CD8-positive, alpha-beta T cell (primary cell): ENCODE measurements at regions of chr22 and their contacts with region 1.

Region 1: GRCh38 chr22:36180038-36180880 is 19.7 kb upstream of the APOL3 start:
- DNase-seq: peak; percentile 75 to 94 (median 87)
- ATAC-seq: peak; percentile 99
- H3K4me3 ChIP-seq: no peak overlapping the region
- H3K4me3 Mint-ChIP-seq: no peak overlapping the region
- H3K27ac ChIP-seq: no peak overlapping the region
- H3K27ac Mint-ChIP-seq: no peak overlapping the region
- H3K4me1 ChIP-seq: peaks cover 4% of the 10 kb centered on the region
- H3K4me1 Mint-ChIP-seq: peaks cover 4% of the 10 kb centered on the region
- H3K27me3 ChIP-seq: no peaks in the 10 kb centered on the region
- H3K27me3 Mint-ChIP-seq: no peaks in the 10 kb centered on the region
- CTCF ChIP-seq: peak; percentile 84

Region 2: GRCh38 chr22:35350539-35351503 is 829.4 kb before region 1 on chr22:
- CTCF ChIA-PET with region 1: no interaction called
- POLR2A ChIA-PET with region 1: no interaction called
- intact Hi-C with region 1: loop called in 1 of 2 experiments (anchors 1 kb)
- DNase-seq: peak; percentile 67 to 92 (median 83)
- ATAC-seq: peak; percentile 85
- H3K4me3 ChIP-seq: peak overlapping the region; percentile 36 to 46
- H3K4me3 Mint-ChIP-seq: peak overlapping the region; percentile 79
- H3K27ac ChIP-seq: no peak overlapping the region
- H3K27ac Mint-ChIP-seq: no peak overlapping the region
- H3K4me1 ChIP-seq: peaks cover 14% of the 10 kb centered on the region
- H3K4me1 Mint-ChIP-seq: peaks cover 20% of the 10 kb centered on the region
- H3K27me3 ChIP-seq: peaks cover 0 to 5% of the 10 kb centered on the region in 2 experiments
- H3K27me3 Mint-ChIP-seq: peaks cover 11% of the 10 kb centered on the region
- CTCF ChIP-seq: peak; percentile 85

Region 3: DNA sequence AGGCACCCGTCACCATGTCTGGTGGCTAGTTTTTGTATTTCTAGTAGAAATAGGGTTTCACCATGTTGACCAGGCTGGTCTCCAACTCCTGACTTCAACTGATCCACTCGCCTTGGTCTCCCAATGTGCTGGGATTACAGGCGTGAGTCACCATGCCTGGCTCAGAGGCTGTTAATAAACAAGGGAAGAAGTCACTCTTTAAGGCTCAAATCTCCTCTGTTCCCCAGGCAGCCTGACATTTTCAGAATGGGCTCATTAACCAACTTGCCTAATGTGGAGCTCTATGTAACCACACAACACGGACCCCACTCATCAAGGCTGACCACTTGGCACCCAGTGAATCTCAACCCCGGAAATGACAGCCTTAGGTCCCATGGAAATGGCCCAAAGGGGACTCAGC is 43.8 kb before region 1 on chr22:
- CTCF ChIA-PET with region 1: interaction called, 100 read pairs
- POLR2A ChIA-PET with region 1: interaction called, 5 read pairs
- intact Hi-C with region 1: no loop called
- DNase-seq: no peak
- ATAC-seq: no peak
- H3K4me3 ChIP-seq: no peak overlapping the region
- H3K4me3 Mint-ChIP-seq: no peak overlapping the region
- H3K27ac ChIP-seq: no peak overlapping the region
- H3K27ac Mint-ChIP-seq: peak overlapping the region; percentile 55
- H3K4me1 ChIP-seq: peaks cover 13% of the 10 kb centered on the region
- H3K4me1 Mint-ChIP-seq: peaks cover 26% of the 10 kb centered on the region
- H3K27me3 ChIP-seq: no peaks in the 10 kb centered on the region
- H3K27me3 Mint-ChIP-seq: no peaks in the 10 kb centered on the region
- CTCF ChIP-seq: no peak

Region 4: GRCh38 chr22:36144886-36145541 is 35.2 kb before region 1 on chr22:
- CTCF ChIA-PET with region 1: interaction called, 100 read pairs
- POLR2A ChIA-PET with region 1: interaction called, 5 read pairs
- intact Hi-C with region 1: loop called (anchors 1 kb)
- DNase-seq: peak in 7 of 9 experiments; percentile 16 to 69 (median 42)
- ATAC-seq: peak; percentile 61
- H3K4me3 ChIP-seq: no peak overlapping the region
- H3K4me3 Mint-ChIP-seq: no peak overlapping the region
- H3K27ac ChIP-seq: no peak overlapping the region
- H3K27ac Mint-ChIP-seq: peak overlapping the region; percentile 42
- H3K4me1 ChIP-seq: peaks cover 18% of the 10 kb centered on the region
- H3K4me1 Mint-ChIP-seq: peaks cover 52% of the 10 kb centered on the region
- H3K27me3 ChIP-seq: no peaks in the 10 kb centered on the region
- H3K27me3 Mint-ChIP-seq: no peaks in the 10 kb centered on the region
- CTCF ChIP-seq: peak; percentile 63

Region 5: DNA sequence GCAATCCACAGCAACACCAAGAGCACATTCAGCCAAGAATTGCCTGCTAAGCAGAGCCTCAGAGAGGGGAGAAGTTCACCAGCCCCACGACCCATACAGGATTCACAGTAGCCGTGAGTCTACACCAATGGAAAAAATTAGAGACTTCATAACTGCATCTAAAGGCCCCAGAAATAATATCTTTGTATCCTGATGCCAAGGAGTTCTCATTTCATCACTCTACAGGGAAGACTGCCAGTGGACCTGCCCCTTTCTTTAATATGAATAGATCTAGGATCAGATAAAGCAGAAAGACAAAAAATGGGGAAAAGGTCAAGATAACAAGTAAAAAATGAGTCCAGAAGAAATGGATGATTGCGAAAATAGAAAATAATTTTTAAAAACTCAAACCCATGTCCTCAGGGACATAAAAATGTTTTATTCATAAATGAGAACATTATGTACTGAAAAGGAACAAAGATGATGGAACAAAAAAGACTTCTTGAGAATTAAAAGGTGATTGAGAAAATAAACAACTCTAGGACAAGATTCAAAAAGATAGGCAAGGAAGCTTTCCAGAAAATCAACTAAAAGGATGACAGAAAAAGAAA is 29.2 kb before region 1 on chr22:
- CTCF ChIA-PET with region 1: interaction called, 100 read pairs
- POLR2A ChIA-PET with region 1: no interaction called
- intact Hi-C with region 1: no loop called
- DNase-seq: no peak
- ATAC-seq: no peak
- H3K4me3 ChIP-seq: no peak overlapping the region
- H3K4me3 Mint-ChIP-seq: no peak overlapping the region
- H3K27ac ChIP-seq: no peak overlapping the region
- H3K27ac Mint-ChIP-seq: peak overlapping the region; percentile 86
- H3K4me1 ChIP-seq: peaks cover 62% of the 10 kb centered on the region
- H3K4me1 Mint-ChIP-seq: peaks cover 85% of the 10 kb centered on the region
- H3K27me3 ChIP-seq: no peaks in the 10 kb centered on the region
- H3K27me3 Mint-ChIP-seq: no peaks in the 10 kb centered on the region
- CTCF ChIP-seq: no peak

Region 6: DNA sequence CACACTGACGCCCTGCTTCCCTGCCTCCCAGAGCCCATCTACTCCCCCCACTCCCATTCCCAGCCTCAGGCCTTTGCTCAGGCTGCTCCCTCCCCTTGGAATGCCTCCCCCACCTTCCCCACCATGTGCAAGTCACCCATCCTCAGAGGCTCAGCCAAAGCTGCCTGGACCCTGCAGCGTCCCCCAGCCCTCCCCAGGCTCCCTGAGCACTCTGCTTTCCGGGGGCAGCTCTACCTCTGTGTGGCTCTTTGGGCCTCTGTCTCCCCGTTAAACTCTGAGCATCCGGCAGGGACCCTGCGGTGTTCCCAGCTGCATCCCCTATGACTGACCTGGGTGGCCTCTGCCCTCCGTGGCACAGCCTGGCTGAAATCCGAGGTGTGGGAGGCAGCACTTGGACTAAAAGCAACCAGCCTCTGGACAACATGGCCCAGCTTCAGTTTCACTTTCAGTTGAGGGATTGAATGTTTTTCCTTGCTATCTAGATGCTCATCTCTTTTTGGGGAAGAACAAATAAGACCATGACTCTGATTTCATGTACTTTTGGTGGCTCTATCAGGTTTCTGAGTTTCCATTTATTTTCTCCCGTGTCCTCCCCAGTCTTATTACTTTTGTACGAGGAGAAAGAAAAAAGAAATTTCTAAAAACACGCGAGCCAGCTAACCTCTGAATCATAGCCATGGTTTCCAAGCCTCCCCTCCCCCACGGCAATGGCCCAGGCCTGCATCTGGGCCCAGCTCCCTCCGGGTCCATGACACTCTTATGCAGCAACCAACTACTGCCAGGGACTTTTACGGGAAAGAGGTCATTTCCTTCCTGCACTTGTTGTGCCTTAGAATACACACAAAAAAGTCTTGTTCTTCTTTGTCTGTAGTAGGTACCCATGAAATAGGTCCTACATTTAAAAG is 23.5 kb before region 1 on chr22:
- CTCF ChIA-PET with region 1: interaction called, 47 read pairs
- POLR2A ChIA-PET with region 1: interaction called, 13 read pairs
- intact Hi-C with region 1: loop called in 1 of 2 experiments (anchors 2 kb)
- DNase-seq: peak; percentile 36 to 90 (median 80)
- ATAC-seq: peak; percentile 46
- H3K4me3 ChIP-seq: peak overlapping the region; percentile 86 to 91
- H3K4me3 Mint-ChIP-seq: peak overlapping the region; percentile 97
- H3K27ac ChIP-seq: peak overlapping the region; percentile 77 to 96
- H3K27ac Mint-ChIP-seq: peak overlapping the region; percentile 99
- H3K4me1 ChIP-seq: peaks cover 62% of the 10 kb centered on the region
- H3K4me1 Mint-ChIP-seq: peaks cover 90% of the 10 kb centered on the region
- H3K27me3 ChIP-seq: no peaks in the 10 kb centered on the region
- H3K27me3 Mint-ChIP-seq: no peaks in the 10 kb centered on the region
- CTCF ChIP-seq: no peak

Region 7: DNA sequence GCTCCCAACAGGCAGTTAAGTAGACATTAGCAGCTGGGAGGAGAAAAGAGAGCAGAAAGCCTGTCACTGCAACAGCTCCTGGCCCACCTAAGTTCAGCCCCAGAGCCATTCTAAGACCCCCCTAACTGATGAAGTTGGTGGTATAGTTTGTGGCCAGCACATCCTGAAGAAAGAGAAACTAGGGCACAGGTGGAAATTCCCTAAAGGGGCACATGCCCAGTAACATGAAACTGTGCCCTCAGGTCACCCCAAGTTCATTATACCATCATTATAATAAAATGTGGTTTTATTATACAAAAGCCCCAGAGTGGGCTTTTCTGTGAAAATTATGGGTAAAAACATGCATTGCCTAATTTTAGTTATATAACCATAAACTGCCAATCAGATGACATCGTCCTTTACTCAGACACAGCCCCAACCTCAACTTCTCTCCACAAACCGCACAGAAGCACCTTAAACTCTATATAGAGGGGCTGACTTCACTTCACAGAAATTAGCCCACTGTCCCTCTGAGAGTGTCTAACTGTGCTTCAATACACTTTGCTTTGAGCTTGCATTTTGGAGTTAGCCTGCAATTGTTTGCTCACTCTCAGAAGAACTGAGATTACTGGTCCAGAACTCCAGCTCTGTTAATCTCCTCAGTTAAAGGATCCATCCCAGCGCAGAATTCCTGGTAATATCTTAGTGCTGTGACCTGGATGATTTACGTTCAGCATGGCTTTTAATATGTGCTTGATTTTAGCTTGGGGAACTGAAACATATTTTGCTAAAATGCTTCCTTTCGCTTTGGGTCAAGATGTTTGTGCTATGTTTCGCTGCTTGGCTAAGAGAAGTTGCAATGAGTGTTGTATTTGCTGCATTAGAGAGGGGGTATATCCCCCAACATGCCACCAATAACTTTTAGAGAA is 17.9 kb before region 1 on chr22:
- CTCF ChIA-PET with region 1: interaction called, 47 read pairs
- POLR2A ChIA-PET with region 1: interaction called, 13 read pairs
- intact Hi-C with region 1: loop called (anchors 1 to 2 kb)
- DNase-seq: peak in 6 of 9 experiments; percentile 18 to 94 (median 56)
- ATAC-seq: peak; percentile 40
- H3K4me3 ChIP-seq: peak overlapping the region; percentile 12 to 14
- H3K4me3 Mint-ChIP-seq: peak overlapping the region; percentile 97
- H3K27ac ChIP-seq: peak overlapping the region; percentile 79 to 96
- H3K27ac Mint-ChIP-seq: peak overlapping the region; percentile 91
- H3K4me1 ChIP-seq: peaks cover 60% of the 10 kb centered on the region
- H3K4me1 Mint-ChIP-seq: peaks cover 90% of the 10 kb centered on the region
- H3K27me3 ChIP-seq: no peaks in the 10 kb centered on the region
- H3K27me3 Mint-ChIP-seq: no peaks in the 10 kb centered on the region
- CTCF ChIP-seq: no peak